HAP-1 (cell line): ENCODE measurements at regions of chr18 and their contacts with region 1.

Region 1: DNA sequence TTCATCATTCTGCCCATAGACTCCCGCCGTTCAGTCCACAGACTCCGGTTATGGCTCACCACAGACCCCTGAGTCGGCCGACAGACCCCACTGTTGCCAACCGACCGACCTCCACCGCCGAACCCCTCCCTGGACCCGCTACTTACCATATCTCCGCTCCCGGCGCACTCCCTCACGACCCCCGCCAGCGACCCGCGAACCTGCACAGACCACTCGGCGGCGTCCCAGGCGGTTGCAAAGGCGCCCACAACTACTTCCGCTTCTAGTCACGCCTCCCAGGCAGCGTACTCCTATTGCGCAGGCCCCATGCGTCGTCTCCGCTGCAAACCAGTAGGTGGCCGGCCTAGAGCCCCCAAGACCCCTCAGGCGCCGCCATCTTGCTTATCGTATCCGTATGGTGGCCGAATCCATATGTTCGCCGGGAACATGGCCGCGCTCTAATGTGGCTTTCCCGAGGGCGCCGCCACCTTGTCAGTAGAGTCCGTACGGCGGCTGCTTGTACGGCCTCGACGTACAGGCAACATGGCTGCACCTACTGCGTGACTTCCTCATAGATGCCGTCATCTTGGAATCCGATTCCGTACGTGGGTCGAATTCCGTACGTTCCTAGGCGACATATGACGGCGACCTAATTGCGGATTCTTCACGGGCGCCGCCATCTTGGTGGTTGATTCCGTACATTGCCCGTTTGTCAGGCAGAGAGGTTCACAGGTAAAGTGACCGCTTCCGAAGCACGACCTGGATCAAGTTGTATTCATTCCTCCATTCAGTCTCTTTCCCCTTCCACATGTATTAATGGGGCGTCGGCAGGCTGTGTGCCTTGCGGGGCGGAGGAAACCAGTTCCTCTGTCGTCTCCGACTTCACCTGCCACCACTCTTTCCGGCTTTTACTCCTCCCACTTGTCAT is at the start of gene CXXC1:
- DNase-seq: peak; percentile 99
- H3K4me3 ChIP-seq: peak within 1 kb of the TSS; percentile 97
- H3K4me1 ChIP-seq: peaks cover 5% of the 10 kb centered on the region; the same call in 1 of the 2 replicates
- H3K27me3 ChIP-seq: no peaks in the 10 kb centered on the region

Region 2: DNA sequence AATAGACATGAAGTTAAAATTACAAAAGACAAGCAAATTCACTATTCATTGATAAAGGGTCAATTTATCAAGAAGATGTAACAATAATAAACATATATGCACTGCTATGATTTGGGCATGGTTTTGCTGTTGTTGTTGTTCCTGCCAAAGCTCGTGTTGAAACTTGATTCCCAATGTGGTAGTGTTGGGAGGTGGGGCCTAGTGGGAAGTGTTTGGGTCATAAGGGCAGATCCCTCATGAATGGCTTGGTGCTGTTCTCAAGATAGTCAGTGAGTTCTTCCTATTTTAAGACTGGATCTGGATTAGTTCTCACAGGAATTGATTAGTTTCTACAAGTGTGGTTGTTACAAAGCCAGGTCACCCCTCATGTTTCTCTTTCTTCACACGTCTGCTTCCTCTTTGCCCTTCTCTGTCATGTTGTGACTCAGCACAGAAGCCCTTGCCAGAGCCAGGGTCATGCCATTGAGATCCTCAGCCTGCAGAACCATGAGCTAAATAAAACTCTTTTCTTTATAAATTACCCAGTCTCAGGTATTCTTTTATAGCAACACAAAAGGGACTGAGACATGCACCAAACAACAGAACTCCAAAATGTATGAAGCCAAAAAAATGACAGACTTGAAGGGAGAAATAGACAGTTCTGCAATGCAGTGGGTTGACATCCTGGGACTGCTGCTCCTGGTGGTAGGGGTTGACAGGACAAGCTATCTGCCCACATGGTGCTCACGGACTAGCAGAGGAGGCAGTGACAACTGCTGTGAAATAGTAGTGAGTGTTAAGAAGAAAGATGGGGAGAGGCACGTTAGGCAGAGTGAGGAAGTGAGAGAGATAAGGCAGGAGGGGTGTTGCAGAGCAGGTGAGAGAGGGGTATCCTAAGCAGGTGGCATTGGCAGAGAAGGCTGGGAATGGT is 68.6 kb after region 1 on chr18:
- in situ Hi-C with region 1: loop called (anchors 10 kb)
- DNase-seq: no peak
- H3K4me3 ChIP-seq: no peak overlapping the region
- H3K4me1 ChIP-seq: peaks cover 5% of the 10 kb centered on the region; the same call in 1 of the 2 replicates
- H3K27me3 ChIP-seq: no peaks in the 10 kb centered on the region